Colonic mucosa (tissue), 4 donors: ENCODE measurements at regions of chr4 and their contacts with region 1.

Region 1: GRCh38 chr4:121112530-121112929 is 40.2 kb upstream of the NDNF start:
- DNase-seq: no peak
- H3K4me3 ChIP-seq: no peak overlapping the region
- H3K27ac ChIP-seq: no peak overlapping the region
- H3K4me1 ChIP-seq: no peaks in the 10 kb centered on the region
- H3K27me3 ChIP-seq: no peaks in the 10 kb centered on the region
- CTCF ChIP-seq: peak; percentile 44

Region 2: DNA sequence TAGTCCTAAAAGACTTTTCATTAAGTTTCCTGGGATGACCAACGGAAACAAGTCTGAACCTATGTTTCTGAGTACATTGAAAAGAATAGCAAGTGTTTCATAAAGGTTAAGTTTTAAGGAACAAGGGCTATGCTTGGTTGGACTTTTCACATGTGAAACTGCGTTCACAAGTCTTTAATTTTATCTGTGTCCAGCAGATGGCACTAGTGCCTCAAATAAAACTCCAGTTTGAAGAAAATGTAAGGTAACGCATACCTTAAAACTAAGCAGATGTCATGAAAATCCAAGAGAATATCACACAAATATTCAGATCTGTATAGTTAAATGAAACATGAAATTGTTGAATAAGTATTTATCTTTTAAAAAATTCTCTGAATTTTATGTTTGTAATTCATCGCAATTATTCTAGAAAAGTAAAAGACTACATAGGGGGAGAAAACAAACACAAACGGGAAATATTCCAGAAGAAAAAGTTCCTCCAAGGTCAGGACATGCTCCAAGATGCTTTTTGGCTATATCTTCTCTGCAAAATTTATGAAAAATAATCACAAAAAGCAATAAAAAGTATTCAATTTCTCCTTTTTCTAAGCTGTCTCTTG is 956.3 kb before region 1 on chr4:
- intact Hi-C with region 1: loop called (anchors 5 kb)
- DNase-seq: peak; percentile 32
- H3K4me3 ChIP-seq: no peak overlapping the region
- H3K27ac ChIP-seq: no peak overlapping the region
- H3K4me1 ChIP-seq: no peaks in the 10 kb centered on the region
- H3K27me3 ChIP-seq: no peaks in the 10 kb centered on the region
- CTCF ChIP-seq: peak; percentile 60

Region 3: DNA sequence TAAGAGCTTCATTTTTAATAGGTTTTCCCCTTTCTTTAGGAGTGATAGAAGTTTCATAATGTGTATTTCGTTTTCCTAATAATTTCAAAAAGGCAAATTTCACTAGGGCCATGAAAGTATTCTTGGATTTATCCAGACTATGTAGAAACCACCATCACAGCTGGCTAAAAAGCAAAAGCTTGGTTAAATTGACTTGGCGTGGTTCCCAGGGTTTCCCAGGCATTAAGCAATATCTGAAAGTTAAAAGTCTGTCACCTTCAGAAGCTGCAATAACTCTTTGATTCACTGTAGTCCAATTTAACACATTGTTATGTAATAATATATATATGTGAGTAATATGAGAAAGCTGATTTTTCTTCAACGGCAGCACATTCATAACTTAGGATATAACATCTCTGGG is 78.5 kb before region 1 on chr4:
- intact Hi-C with region 1: no loop called
- DNase-seq: peak; percentile 29
- H3K4me3 ChIP-seq: no peak overlapping the region
- H3K27ac ChIP-seq: no peak overlapping the region
- H3K4me1 ChIP-seq: no peaks in the 10 kb centered on the region
- H3K27me3 ChIP-seq: no peaks in the 10 kb centered on the region
- CTCF ChIP-seq: no peak